Pancreas (tissue), 10 donors: ENCODE measurements at regions of chr17 and their contacts with region 1.

Region 1: DNA sequence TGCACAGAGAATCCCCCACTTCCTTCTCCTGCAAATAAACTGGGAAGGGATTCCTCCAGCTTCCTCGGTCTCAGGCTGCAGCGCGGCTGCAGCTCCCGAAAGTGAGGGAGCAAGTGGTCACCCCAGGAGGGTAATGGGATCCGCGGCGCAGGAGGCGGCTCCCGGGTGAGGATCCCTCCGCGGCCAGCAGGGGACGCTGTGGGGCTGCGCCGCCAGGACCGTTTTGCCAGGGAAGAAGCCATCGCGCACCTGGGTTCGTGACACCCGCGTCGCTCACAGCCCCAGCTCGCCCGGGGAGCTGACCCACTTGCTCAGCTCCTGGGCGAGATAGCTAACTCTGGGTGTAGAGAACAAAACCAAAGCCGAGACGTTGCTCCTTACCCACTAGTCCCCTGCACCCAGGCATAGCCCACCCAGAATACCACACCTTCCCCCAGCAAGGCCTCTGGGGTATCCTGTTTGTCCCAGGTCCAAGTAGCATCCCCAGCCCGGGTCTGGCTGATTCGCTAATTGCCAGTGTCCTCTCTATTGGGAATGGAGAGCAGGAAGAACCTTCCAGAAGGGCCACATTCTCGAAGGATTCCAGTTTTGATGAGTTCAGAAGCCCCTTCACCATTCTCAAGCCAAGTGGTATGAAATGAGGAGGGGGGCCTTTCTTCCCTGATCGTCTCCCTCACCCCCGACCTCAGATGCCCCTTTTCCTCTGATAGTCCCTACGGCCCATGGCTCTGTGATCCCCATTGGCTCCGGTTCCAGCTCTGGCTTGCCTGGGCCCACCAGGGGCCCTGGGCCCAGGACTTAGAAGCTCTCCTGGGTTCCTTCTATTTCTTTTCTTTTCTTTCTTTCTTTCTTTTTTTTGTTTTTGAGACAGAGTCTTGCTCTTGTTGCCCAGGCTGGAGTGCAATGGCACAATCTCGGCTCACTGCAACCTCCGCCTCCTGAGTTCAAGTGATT is 14.1 kb downstream of the CYGB start:
- DNase-seq: peak in 5 of 6 donors; percentile 57 to 94 (median 80)
- ATAC-seq: peak; percentile 77 to 90 (median 88)
- H3K4me3 ChIP-seq: no peak overlapping the region
- H3K27ac ChIP-seq: no peak overlapping the region
- H3K4me1 ChIP-seq: peaks cover 9 to 14% (median 10%) of the 10 kb centered on the region in 3 donors
- H3K27me3 ChIP-seq: peaks cover 0 to 5% (median 0%) of the 10 kb centered on the region in 4 donors
- CTCF ChIP-seq: peak; percentile 99 to 100 (median 99)

Region 2: DNA sequence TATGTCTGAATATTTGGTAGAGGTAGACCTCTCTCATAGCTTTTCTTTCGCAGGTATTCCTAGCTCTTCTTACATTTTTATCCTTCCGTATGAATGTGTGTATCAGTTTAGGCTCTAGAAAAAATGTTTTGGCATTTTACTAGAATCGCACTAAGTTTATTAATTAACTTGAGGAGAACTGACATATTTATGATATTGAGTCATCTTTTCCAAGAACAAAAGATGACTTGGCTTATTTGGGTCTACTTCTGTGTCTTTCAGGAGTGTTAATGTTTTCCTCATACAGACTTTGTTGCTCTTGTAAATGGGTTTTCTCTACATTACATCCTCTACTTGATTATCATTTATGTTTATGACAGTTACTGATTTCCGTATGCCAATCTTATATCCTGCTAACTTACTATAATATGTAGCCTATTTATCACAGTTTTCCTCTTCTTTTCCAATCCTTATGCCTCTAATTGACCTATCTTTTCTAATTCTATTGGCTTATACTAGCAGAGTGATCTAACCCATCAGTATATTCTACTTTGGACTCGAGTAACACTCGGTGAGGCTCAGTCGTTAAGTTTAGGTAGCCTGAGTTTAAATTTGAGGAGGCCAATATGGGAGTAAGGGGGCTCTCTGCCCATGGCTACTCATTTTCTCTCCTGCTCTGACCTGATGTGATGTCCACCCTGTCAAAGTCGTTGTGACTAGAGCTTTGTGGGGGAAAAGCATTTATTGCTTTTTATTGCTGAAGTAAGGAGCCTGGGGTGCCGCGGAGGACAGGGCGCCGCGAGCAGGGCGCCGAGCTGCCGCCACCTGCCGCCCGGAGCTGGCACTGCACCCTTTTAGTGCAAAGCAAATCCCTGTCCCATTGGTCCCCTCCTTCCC is 100.1 kb after region 1 on chr17:
- intact Hi-C with region 1: loop called in 2 of 3 experiments (anchors 5 to 10 kb)
- DNase-seq: peak; percentile 56 to 95 (median 78)
- ATAC-seq: peak; percentile 95 to 99 (median 98)
- H3K4me3 ChIP-seq: no peak overlapping the region
- H3K27ac ChIP-seq: no peak overlapping the region
- H3K4me1 ChIP-seq: no peaks in the 10 kb centered on the region
- H3K27me3 ChIP-seq: no peaks in the 10 kb centered on the region
- CTCF ChIP-seq: peak; percentile 85 to 95 (median 94)